OCI-LY7 (cell line): ENCODE measurements at regions of chr6 and their contacts with region 1.

Region 1: GRCh38 chr6:89387516-89388222 is 24.4 kb downstream of the RRAGD start:
- DNase-seq: peak; percentile 90
- H3K4me3 ChIP-seq: peak overlapping the region; percentile 56
- H3K27ac ChIP-seq: peak overlapping the region; percentile 83
- H3K4me1 ChIP-seq: peaks cover 56% of the 10 kb centered on the region
- CTCF ChIP-seq: no peak

Region 2: DNA sequence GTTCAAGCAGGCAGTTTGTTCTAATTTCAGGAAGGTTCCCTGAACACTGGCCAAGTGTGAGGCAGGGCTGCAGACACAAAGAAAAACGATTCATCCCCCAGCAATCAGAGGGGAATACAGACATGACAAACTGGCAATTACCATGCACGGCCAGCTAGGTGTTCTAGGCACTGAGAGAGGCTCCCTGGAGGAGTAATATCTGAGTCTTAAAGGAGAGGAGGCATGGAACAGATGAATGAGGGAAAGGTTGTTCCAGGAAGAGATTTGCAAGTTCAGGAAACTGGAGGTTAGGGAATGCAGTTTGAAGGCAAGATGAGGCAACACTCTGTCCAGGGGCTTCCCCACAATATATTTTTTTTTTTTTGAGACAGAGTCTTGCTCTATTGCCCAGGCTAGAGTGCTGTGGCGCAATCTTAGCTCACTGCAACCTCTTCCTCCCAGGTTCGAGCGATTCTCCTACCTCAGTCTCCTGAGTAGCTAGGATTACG is 13.3 kb after region 1 on chr6:
- CTCF ChIA-PET with region 1: no interaction called
- POLR2A ChIA-PET with region 1: interaction called, 26 read pairs
- intact Hi-C with region 1: no loop called
- DNase-seq: no peak
- H3K4me3 ChIP-seq: no peak overlapping the region
- H3K27ac ChIP-seq: no peak overlapping the region
- H3K4me1 ChIP-seq: peaks cover 39% of the 10 kb centered on the region
- CTCF ChIP-seq: no peak